Activated CD4-positive, alpha-beta memory T cell treated with anti-CD3 and anti-CD28 coated beads for 36 hours (primary cell): ENCODE measurements at regions of chr5 and their contacts with region 1.

Region 1: DNA sequence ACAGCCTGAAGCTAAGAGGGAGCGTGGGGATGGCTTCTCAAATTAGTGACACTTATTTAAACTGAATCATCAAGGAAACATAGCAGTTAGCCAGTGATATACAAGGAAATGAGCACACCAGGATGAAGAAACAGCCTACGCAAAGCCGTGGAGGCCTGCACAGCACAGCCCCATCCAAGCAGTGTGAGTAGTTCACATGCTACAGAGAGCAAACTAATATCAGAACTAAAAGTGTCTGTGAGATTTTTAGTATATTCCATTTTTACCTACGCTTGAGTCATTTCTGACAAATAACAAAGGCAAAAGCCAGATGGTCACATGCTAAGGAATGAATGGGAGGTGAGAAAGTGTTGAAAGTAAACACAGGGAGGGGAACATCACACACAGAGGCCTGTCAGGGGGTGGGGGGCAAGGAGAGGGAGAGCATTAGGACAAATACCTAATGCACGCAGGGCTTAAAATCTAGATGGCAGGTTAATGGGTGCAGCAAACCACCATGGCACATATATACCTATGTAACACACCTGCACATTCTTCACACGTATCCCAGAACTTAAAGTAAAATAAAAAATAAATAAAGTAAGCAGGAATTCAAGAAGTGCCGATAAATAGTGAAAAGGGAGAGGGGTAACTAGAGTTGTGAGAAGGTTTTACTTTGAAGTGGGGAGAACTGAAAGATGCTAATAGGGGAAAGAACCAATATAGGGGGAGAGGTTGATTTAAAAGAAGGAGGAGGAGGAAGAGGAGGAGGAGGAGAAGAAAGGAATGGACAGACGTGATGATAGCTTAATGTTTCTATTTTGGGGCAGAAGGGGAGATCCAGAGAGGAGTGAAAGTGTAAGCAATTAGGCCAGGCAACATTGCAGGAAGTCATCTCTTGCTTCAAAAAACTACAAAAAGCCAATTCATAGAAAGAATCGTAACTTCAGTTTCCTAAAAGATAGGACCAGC is 100.9 kb upstream of the PTGER4 start:
- DNase-seq: peak; percentile 86
- H3K4me3 Mint-ChIP-seq: peak overlapping the region; percentile 48
- H3K27ac Mint-ChIP-seq: peak overlapping the region; percentile 66
- H3K4me1 Mint-ChIP-seq: peaks cover 38% of the 10 kb centered on the region
- H3K27me3 Mint-ChIP-seq: no peaks in the 10 kb centered on the region

Region 2: DNA sequence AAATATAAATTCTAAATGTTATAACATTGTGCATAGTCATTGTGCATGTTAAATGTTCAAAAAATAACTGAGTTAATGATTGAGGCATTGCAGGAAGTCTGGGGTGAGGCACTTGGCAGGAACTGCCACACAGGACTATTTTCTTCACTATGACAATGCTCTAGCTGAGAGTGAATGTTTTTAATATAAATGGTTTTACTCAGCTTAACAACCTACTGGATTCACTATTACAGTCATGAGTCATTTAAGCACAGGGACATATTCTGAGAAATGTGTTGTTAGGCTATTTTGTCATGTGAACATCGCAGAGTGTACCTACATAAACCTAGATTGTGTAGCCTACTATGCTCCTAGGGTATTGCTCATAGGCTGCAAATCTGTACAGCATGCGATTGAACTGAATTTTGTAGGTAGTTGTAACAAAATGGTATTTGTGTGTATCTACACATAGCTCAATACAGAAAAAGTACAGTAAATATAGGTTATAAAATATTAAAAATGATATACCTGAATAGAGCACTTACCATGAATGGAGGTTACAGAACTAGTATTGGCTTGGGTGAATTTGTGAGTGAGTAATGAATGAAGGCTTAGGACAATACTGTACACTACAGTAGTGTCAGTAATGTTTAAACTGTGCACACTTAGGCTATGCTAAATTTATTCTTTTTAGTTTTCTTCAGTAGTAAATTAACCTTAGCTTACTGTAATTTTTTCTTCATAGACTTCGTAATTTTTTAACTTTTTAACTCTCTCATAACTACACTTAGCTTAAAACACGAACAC is 245.1 kb before region 1 on chr5:
- CTCF ChIA-PET with region 1: no interaction called
- POLR2A ChIA-PET with region 1: no interaction called
- intact Hi-C with region 1: loop called (anchors 5 kb)
- DNase-seq: peak; percentile 56
- H3K4me3 Mint-ChIP-seq: no peak overlapping the region
- H3K27ac Mint-ChIP-seq: peak overlapping the region; percentile 33
- H3K4me1 Mint-ChIP-seq: peaks cover 50% of the 10 kb centered on the region
- H3K27me3 Mint-ChIP-seq: no peaks in the 10 kb centered on the region

Region 3: DNA sequence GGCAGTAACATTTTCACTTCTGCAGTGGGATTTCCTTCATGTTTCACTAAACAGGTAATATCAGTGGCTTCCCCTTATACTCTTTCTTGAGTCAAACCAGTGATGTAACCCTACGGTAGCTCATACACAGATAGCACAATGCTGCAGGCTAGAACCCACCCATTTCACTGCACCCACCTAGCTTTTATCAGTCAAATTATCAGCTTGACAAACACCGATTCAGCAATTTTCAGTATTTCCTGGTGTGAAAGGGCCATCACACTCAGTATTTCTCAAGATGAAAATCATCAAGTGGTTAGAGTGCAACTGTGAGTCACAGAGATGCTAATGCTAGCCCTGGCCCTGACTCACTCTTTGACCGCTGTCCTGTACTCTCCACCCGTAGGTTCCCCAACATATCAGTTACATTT is 141.3 kb before region 1 on chr5:
- CTCF ChIA-PET with region 1: no interaction called
- POLR2A ChIA-PET with region 1: no interaction called
- intact Hi-C with region 1: loop called (anchors 2 kb)
- DNase-seq: peak; percentile 58
- H3K4me3 Mint-ChIP-seq: no peak overlapping the region
- H3K27ac Mint-ChIP-seq: peak overlapping the region; percentile 70
- H3K4me1 Mint-ChIP-seq: peaks cover 74% of the 10 kb centered on the region
- H3K27me3 Mint-ChIP-seq: no peaks in the 10 kb centered on the region

Region 4: DNA sequence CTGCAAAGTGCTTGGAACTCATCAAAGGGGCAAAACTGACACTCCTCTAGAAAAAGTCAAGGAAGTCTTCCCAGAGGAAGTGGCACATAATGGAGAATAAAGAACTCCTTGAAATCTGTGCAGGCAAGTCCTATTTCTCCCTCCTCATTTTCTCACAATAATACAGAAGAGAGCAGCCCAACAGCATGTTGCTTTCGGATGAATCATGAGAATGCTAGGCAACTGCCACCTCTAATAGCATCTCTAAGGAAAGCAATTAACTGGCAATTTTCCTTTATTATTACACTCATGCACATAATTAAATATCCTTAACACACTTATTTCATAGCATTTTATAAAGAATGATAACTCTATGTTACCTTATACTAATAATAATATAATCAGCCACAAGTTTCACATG is 21.3 kb before region 1 on chr5:
- CTCF ChIA-PET with region 1: no interaction called
- POLR2A ChIA-PET with region 1: no interaction called
- intact Hi-C with region 1: loop called (anchors 1 kb)
- DNase-seq: no peak
- H3K4me3 Mint-ChIP-seq: no peak overlapping the region
- H3K27ac Mint-ChIP-seq: no peak overlapping the region
- H3K4me1 Mint-ChIP-seq: peaks cover 20% of the 10 kb centered on the region
- H3K27me3 Mint-ChIP-seq: no peaks in the 10 kb centered on the region

Region 5: DNA sequence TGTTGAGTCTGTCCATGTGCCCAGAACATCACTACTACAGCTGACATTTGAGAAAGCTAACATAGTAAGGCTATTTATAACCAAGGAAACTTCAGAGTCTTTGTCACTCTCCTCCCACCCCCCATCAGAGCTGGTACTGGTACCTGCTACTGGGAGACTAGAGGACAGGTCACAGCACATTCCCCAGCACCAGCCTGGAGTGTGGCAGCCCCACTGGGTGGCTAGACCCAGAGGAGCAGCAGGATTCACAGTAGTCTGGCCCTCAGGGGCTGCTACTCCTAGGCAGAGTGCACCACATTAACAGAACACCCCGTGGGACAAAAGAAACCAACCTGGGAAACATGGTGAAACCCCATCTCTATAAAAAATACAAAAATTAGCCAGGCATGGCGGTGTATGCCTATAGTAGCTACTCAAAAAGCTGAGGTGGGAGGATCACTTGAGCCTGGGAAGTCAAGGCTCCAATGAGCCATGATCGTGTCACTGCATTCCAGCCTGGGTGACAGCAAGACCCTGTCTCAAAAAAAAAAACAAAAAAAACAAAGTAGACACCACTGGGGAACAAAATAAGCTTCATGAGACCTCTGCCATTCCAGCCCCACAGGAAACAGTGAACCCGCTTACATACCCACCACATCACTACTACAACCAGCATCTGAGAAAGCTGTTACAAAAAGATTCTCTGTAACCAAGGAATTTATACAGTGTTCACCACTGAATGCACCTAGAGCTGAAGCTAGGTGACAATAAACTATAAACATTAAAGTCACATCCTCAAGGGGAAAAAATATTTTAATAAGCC is 74.6 kb after region 1 on chr5:
- CTCF ChIA-PET with region 1: no interaction called
- POLR2A ChIA-PET with region 1: no interaction called
- intact Hi-C with region 1: loop called (anchors 1 kb)
- DNase-seq: no peak
- H3K4me3 Mint-ChIP-seq: peak overlapping the region; percentile 74
- H3K27ac Mint-ChIP-seq: peak overlapping the region; percentile 80
- H3K4me1 Mint-ChIP-seq: peaks cover 60% of the 10 kb centered on the region
- H3K27me3 Mint-ChIP-seq: no peaks in the 10 kb centered on the region

Region 6: DNA sequence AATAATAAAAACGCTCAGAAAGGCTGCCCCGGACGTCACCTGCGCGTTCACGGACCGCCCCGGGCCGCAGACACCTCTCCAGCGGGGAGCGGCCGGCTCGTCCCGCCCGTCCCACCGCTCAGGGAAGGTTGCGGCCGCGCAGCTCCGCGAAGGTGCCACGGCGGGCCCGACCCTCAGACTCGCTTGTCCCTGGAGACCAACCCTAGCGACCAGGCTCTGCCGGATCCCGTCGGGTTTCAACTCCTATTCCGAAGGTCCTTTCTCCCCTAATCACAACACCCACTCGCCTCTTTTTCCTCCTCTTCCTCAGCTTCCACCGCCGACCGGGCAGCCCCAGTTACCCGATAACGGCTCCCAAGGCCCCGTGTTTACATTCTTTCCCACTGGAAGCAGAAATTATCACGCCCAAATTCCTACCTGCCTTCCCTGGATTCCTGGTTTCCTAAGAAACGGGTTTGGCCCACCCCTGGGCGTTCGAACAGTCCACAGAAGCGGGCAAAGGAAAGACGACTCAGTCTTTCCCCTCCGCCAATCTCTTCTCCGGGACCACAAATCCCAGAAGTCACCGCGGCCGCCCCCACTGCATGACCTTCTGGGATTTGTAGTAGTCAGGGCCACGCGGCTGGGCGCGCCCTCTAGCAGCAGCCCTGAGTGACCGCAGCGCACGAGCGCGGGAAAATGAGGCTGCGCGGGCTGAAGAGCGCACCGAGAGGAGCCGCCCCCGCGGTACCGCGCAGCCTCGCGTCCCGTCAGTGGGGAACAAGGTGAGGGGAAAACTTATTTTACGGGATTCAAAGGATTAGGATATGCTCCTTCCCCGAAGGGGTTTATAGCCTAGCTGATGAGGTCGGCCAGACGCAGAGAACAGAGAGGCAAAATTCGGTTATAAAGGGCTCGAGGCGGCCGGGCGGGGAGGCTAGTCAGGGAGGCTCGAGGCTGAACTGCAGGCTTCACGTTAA is 176.9 kb after region 1 on chr5 and contains the start of gene TTC33:
- CTCF ChIA-PET with region 1: no interaction called
- POLR2A ChIA-PET with region 1: no interaction called
- intact Hi-C with region 1: loop called (anchors 1 kb)
- DNase-seq: peak; percentile 98
- H3K4me3 Mint-ChIP-seq: peak within 1 kb of the TSS; percentile 21
- H3K27ac Mint-ChIP-seq: no peak within 1 kb of the TSS
- H3K4me1 Mint-ChIP-seq: peaks cover 17% of the 10 kb centered on the region
- H3K27me3 Mint-ChIP-seq: no peaks in the 10 kb centered on the region
- total RNA-seq, gene TTC33: 30.2 to 34.1 TPM